GM13976 (cell line): ENCODE measurements at regions of chr15 and their contacts with region 1.

Region 1: DNA sequence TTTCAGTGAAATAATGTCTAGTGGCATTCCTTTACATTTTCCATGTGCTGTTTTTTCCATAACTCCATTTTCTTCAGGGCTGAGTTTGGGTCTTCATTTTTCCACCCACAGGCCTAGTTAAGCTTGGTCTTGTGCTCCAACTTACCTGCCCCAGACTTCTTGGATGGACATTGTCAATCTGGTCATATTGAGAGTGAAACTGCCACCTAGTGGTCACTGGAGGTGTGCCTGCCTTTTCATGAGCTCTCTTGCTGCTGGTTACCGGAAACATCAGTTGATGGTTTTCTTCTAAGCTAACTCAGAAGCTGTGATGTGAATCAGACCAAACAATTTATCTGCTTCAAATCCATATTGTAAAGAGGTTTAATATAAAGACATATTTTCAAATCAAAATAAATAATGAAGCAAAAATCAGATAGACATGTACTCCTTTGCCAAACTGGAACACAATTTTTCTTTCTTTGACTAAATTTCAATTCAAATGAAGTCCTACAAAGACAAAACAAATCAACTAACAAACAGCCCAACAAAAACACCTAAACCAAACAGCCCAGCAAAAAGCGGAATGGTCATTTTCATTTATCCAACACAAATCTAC is 135.1 kb upstream of the RASGRP1 start:
- DNase-seq: peak; percentile 55
- CTCF ChIP-seq: peak; percentile 79

Region 2: GRCh38 chr15:38002883-38003477 is 696.8 kb before region 1 on chr15:
- in situ Hi-C with region 1: loop called (anchors 25 kb)
- DNase-seq: no peak
- CTCF ChIP-seq: peak; percentile 41

Region 3: DNA sequence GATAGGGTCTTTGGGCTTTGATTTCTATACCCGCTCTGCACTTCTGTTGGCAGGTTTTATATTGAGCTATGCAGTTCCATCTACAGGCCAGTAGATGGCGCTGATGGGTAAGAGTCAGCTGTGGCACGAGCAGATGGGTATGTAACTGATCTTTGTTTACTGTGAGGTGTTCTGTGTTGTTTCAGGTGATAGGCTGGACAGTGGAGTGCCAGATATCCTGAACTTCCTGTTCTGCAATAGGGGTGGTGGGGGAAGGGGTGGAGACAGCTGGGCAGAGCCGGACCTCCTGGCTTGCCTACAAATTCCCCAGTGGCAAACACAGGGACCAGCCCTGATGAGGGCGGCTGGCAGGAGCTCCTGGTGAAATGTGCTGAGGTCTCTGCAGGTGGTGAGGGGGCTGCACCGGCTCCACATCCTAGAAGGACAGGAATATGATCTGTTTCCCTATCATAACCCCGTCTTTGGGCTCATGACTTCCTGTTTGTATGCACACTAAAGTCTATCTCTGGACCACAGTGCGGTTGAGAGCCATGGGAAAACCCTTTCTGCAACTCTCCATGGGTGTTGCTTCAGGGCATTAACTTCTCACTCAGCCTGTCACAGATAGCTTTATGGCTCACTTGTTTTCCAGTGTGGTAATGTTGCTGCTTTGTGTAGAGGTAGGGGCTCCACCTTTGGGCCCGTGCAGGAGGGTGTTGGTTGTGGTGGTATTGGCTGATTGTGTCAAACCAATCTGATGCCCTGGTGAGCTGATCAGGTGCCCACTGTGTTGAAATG is 259.2 kb before region 1 on chr15:
- in situ Hi-C with region 1: loop called (anchors 10 kb)
- DNase-seq: peak; percentile 40
- CTCF ChIP-seq: peak; percentile 95

Region 4: DNA sequence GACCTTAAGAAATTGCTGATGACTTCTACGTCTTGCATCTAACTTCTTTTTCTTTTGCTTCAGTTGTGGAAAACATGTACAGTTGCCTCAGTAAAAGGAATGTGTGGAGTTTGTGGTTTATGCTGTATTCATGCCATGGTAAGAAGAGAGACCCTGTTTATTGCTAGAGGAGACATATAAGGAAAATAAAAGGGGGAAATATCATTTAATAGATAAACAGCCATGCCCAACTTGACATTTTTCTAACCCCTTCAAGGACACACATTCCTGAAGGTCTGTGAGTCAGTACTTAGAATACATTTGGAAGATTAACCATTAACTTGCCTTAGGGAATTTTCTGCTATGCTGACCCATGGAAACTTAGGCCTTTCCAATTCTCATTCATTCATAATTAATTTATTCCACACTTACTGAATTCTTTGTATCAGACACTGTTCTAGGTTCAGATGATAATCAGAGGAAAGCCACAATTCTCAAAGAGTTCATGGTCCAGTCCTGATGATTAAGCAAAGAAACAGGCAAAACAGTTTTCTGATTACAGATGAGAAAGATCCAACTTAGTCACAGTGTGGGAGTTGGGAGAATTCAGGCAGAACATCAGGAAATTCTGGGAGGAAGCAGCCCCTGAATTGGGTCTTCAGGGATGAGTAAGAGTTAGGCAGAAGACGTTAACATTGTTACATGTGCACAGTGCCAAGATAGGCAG is 194.7 kb after region 1 on chr15:
- in situ Hi-C with region 1: no loop called
- DNase-seq: no peak
- CTCF ChIP-seq: no peak

Region 5: DNA sequence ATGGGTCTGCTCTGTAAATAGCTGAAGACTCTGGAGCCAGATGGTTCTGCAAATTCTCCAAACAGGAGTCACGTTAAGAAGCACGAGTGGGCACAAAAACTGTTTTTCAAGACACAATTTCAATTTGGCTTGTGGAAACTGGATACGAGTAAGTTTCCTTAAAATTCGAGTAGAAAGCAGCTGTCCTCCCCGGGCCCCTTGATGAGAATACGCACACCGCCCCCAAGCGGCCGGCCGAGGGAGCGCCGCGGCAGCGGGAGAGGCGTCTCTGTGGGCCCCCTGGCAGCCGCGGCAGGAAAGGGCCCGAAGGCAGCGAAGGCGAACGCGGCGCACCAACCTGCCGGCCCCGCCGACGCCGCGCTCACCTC is 880.4 kb after region 1 on chr15:
- in situ Hi-C with region 1: loop called (anchors 25 kb)
- DNase-seq: peak; percentile 91
- CTCF ChIP-seq: peak; percentile 97

Region 6: GRCh38 chr15:39747326-39747725 is 1047.6 kb after region 1 on chr15:
- in situ Hi-C with region 1: loop called (anchors 25 kb)
- DNase-seq: no peak
- CTCF ChIP-seq: no peak